Activated T-helper 1 cell treated with anti-CD3 and anti-CD28 coated beads, Interleukin-12 subunit alpha, Interleukin-12 subunit beta, Interleukin-2, Interleukin-4 antibody, amounts not matched to agents 30 ng/mL and 10 ng/mL and 1 ng/mL, durations not matched to agents 14 hours and 24 hours and 36 hours (primary cell): ENCODE measurements at regions of chr9 and their contacts with region 1.

Region 1: DNA sequence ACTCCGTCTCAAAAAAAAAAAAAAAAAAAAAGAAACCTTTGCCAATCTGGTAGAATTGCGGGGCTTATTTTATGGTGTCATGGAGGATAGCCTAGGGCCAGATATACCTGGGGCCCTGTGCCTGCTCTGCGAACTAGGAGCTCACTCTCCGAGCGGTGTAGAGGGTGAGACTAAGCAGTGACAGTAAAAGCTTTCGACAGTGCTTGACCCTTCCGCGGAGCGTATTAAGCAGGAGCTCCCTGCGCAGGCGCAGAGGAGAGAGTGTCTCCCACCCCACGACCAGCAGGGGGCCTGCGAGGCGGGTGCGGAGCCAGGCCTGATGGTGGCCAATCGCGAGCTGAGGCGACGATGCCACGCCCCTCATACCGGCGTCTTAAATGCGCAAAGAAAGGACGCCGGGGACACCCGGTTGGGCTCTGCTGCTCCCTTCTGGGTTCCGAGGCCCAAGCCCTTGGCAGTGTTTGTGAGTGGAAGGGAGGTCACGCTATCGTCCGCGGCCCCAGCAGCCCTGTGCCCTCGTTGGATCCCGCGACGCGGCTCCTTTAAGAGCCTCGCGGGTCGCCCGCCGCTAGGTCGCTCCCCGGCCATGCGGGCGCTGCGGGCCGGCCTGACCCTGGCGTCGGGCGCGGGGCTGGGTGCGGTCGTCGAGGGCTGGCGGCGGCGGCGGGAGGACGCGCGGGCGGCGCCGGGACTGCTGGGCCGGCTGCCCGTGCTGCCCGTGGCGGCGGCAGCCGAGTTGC is at the start of gene ENDOG:
- DNase-seq: peak; percentile 99
- H3K4me3 Mint-ChIP-seq: peak within 1 kb of the TSS; percentile 88
- H3K27ac Mint-ChIP-seq: peak within 1 kb of the TSS; percentile 79
- H3K4me1 Mint-ChIP-seq: peaks cover 14% of the 10 kb centered on the region
- H3K27me3 Mint-ChIP-seq: no peaks in the 10 kb centered on the region
- total RNA-seq, gene ENDOG: 22.1 and 26.2 TPM in 2 replicates

Region 2: GRCh38 chr9:128455849-128456612 is 362.2 kb before region 1 on chr9 and contains the start of gene ODF2:
- intact Hi-C with region 1: loop called (anchors 5 kb)
- DNase-seq: peak; percentile 98
- H3K4me3 Mint-ChIP-seq: peak within 1 kb of the TSS; percentile 93
- H3K27ac Mint-ChIP-seq: peak within 1 kb of the TSS; percentile 98
- H3K4me1 Mint-ChIP-seq: peaks cover 13% of the 10 kb centered on the region
- H3K27me3 Mint-ChIP-seq: peaks cover 3% of the 10 kb centered on the region
- total RNA-seq, gene ODF2: 55.6 and 57.6 TPM in 2 replicates

Region 3: GRCh38 chr9:128643519-128644300 is 174.6 kb before region 1 on chr9:
- intact Hi-C with region 1: loop called (anchors 1 kb)
- DNase-seq: no peak
- H3K4me3 Mint-ChIP-seq: no peak overlapping the region
- H3K27ac Mint-ChIP-seq: peak overlapping the region; percentile 21
- H3K4me1 Mint-ChIP-seq: peaks cover 7% of the 10 kb centered on the region
- H3K27me3 Mint-ChIP-seq: no peaks in the 10 kb centered on the region

Region 4: DNA sequence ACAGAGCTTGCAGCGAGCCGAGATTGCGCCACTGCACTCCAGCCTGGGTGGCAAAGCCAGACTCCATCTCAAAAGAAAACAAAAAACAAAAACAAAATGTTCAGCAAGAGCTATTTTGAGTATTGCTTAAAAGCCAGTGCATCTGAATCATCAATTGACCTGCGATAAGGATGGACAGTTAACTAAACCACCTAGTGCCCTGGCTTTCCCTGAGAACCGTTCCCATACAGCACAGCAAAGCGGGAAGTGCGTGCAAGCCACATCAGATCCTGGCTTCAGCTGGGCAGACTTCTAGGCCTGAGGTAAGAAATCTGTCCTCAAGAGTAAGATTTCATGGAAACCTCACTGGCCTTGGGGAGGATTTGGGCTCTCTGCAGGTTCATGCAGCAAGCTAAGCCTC is 164.3 kb before region 1 on chr9:
- intact Hi-C with region 1: no loop called
- DNase-seq: no peak
- H3K4me3 Mint-ChIP-seq: no peak overlapping the region
- H3K27ac Mint-ChIP-seq: no peak overlapping the region
- H3K4me1 Mint-ChIP-seq: peaks cover 15% of the 10 kb centered on the region
- H3K27me3 Mint-ChIP-seq: no peaks in the 10 kb centered on the region

Region 5: DNA sequence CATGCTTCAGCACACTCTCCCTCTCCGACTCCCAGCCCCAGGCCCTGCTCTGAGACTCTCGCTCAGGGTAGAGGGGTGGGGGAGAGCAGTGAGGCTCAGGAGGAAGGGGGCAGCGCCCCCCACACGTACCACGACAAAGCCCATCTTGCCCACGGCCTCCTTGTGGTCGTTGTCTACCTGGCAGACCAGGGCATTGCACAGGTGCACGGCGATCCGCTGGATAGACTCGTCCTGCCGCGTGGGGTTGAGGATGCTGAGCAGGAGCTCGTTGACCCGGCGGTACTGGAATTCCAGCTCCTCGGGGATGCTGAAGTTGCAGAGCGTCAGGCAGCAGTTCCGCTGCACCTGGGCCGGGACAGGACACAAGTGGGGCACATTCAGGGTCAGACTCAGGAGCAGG is 75.9 kb before region 1 on chr9:
- intact Hi-C with region 1: no loop called
- DNase-seq: no peak
- H3K4me3 Mint-ChIP-seq: no peak overlapping the region
- H3K27ac Mint-ChIP-seq: no peak overlapping the region
- H3K4me1 Mint-ChIP-seq: no peaks in the 10 kb centered on the region
- H3K27me3 Mint-ChIP-seq: no peaks in the 10 kb centered on the region

Region 6: GRCh38 chr9:128771745-128772519 is 46.3 kb before region 1 on chr9 and contains the start of gene ZER1:
- intact Hi-C with region 1: loop called (anchors 1 kb)
- DNase-seq: peak; percentile 92
- H3K4me3 Mint-ChIP-seq: peak within 1 kb of the TSS; percentile 98
- H3K27ac Mint-ChIP-seq: peak within 1 kb of the TSS; percentile 95
- H3K4me1 Mint-ChIP-seq: peaks cover 14% of the 10 kb centered on the region
- H3K27me3 Mint-ChIP-seq: no peaks in the 10 kb centered on the region
- total RNA-seq, gene ZER1: 21.1 and 21.5 TPM in 2 replicates

Region 7: GRCh38 chr9:128792978-128793686 is 25.1 kb before region 1 on chr9:
- intact Hi-C with region 1: no loop called
- DNase-seq: no peak
- H3K4me3 Mint-ChIP-seq: no peak overlapping the region
- H3K27ac Mint-ChIP-seq: no peak overlapping the region
- H3K4me1 Mint-ChIP-seq: peaks cover 11% of the 10 kb centered on the region
- H3K27me3 Mint-ChIP-seq: no peaks in the 10 kb centered on the region

Region 8: GRCh38 chr9:128829477-128830251 is 11.4 kb after region 1 on chr9 and contains the start of gene SPOUT1:
- intact Hi-C with region 1: loop called (anchors 1 kb)
- DNase-seq: peak; percentile 95
- H3K4me3 Mint-ChIP-seq: peak within 1 kb of the TSS; percentile 97
- H3K27ac Mint-ChIP-seq: peak within 1 kb of the TSS; percentile 88
- H3K4me1 Mint-ChIP-seq: peaks cover 23% of the 10 kb centered on the region
- H3K27me3 Mint-ChIP-seq: no peaks in the 10 kb centered on the region
- total RNA-seq, gene SPOUT1: 151 and 158 TPM in 2 replicates

Region 9: GRCh38 chr9:129036241-129036922 is 218.1 kb after region 1 on chr9 and contains the start of gene MIGA2:
- intact Hi-C with region 1: loop called (anchors 1 kb)
- DNase-seq: peak; percentile 95
- H3K4me3 Mint-ChIP-seq: peak within 1 kb of the TSS; percentile 97
- H3K27ac Mint-ChIP-seq: peak within 1 kb of the TSS; percentile 79
- H3K4me1 Mint-ChIP-seq: peaks cover 20% of the 10 kb centered on the region
- H3K27me3 Mint-ChIP-seq: peaks cover 2% of the 10 kb centered on the region
- total RNA-seq, gene MIGA2: 43.4 and 43.8 TPM in 2 replicates

Region 10: DNA sequence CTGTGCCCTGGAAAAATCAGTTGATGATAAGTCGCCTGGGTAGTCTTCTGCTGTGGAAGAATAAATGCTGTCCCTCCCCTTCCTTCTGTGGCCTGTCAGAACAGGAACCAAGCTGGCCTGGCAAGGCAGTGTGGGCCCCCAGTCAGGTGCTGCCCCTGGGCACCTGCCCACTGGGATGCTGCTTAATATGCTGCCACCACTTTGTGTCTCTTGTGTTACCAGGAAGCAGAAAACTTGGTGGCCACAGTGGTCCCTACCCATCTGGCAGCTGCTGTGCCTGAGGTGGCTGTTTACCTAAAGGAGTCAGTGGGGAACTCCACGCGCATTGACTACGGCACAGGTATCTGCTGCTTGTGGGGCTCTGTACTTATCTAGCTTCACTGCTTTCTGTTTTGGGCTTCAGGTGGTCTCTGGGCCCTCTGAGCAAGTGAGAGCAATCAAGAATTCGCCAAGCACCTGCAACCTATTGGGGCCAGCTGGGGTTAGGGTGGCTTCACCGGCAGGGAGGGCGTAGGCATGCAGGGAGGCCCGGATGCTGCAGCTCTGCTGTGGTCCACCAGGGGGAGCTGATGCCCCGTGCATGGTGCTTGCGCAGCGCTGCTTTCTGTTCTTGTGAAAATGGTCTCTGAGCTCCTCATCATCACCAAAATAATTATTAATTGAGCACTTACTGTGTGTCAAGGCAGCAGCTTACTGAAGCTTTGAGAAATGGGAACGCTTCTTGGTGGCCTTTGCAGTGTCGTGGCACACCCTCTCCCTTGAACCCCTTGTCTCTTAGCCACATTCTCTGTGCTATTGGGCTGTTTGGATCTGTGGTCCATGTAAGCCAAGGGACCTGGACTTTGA is 313.3 kb after region 1 on chr9:
- intact Hi-C with region 1: no loop called
- DNase-seq: peak; percentile 75
- H3K4me3 Mint-ChIP-seq: no peak overlapping the region
- H3K27ac Mint-ChIP-seq: no peak overlapping the region
- H3K4me1 Mint-ChIP-seq: peaks cover 6% of the 10 kb centered on the region
- H3K27me3 Mint-ChIP-seq: no peaks in the 10 kb centered on the region